ENCODE measurements at regions of chr10 and their contacts with region 1.

Region 1: GRCh38 chr10:77234599-77234998 is 403.0 kb downstream of the KCNMA1 start:
- DNase-seq: peak; percentile 27
- H3K4me3 Mint-ChIP-seq: peak overlapping the region; percentile 11
- H3K27ac Mint-ChIP-seq: peak overlapping the region; percentile 88
- H3K4me1 Mint-ChIP-seq: peaks cover 47% of the 10 kb centered on the region
- H3K27me3 Mint-ChIP-seq: no peaks in the 10 kb centered on the region
- CTCF ChIP-seq: no peak

Region 2: DNA sequence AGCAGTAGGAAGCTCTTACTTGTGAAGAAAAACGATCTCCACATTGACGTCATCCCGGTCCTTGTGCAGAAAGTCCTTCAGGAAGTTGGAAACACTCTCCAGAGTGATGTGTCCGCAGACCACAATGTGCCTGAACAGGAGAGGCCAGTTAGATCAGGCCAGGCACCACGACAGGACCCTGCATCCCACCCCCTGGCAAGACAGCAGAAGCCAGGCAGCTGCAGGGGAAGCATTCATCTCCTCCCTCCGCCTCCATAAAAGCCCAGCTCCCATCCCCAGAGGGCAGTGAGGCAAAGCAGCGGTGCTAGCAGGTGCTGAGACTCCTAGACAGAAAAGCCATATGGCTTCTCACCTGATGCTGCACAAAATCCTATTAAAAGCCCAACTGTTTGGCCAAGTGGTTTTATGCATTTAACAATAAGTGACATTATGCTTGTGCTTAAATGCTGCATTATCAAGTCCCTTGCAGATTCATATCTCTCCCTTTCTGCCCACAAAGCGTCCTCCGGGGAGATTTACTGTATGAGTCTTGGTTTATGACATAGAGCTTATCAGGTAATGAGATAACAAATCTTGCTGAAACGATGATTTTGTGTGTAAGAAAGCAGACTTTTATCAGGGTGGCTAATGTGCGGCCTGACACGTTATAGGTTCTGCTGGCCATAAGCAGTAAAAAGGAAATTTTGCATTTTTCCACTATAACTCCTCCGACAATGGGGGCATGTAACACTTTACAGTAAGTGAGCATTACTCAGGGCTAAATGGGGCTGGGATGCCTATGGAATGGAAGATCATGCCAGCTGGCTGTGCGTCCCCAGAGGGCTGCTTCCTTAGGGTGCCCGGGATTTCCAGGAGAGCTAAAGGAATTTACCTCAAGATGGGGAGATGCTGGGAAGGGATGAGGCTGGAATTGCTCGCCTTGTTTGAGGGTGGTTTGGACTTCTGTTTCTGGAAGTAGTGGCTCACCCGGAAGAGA is 143.9 kb before region 1 on chr10:
- CTCF ChIA-PET with region 1: no interaction called
- intact Hi-C with region 1: no loop called
- DNase-seq: no peak
- H3K4me3 Mint-ChIP-seq: no peak overlapping the region
- H3K27ac Mint-ChIP-seq: no peak overlapping the region
- H3K4me1 Mint-ChIP-seq: no peaks in the 10 kb centered on the region
- H3K27me3 Mint-ChIP-seq: peaks cover 82% of the 10 kb centered on the region
- CTCF ChIP-seq: no peak

Region 3: GRCh38 chr10:77185696-77186095 is 48.9 kb before region 1 on chr10:
- CTCF ChIA-PET with region 1: no interaction called
- intact Hi-C with region 1: loop called (anchors 2 kb)
- DNase-seq: peak; percentile 33
- H3K4me3 Mint-ChIP-seq: no peak overlapping the region
- H3K27ac Mint-ChIP-seq: peak overlapping the region; percentile 23
- H3K4me1 Mint-ChIP-seq: peaks cover 28% of the 10 kb centered on the region
- H3K27me3 Mint-ChIP-seq: no peaks in the 10 kb centered on the region
- CTCF ChIP-seq: no peak

Region 4: DNA sequence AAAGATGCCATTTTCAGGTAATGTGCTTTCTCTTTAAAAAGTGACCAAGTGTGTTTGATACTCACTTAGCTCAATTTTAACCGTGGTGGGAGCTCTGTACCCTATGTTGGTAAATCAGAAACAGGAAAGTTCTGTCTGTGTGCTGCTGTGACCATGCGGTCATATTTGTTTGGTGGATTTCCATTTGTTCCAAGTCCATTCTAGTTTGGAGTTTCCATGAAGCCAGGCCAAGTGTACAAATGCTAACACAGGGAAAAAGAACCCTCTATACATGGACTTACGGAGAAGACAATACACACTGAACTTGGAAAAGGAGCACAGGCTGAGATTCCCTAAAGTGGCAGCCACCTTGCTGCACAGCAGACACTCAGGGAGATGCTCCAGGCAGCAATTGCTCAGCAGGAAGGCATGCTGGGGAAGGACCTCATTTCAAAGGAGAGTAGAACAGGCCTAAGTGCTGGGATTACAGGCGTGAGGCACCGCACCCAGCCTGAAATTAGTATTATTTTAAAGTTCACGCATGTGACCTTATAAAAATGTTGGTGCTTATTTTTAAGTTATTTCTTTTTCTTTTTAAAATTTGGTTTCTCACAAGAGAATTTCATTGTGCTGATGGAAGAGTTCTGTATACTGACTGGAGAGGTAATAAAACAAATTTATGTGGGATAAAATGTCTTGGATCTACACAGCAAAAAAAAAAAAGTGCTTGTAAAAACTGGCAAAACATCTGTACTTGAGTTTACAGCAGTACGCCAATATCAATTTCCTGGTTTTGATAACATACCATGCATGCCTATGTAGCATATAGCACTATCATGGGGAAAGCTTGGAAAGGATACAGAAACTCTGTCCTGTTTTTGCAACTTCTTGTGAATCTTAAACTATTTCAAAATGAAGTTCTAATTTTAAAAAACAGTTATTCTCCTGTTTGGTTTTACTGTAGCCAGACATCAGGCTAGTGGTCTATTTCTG is 33.2 kb before region 1 on chr10:
- CTCF ChIA-PET with region 1: no interaction called
- intact Hi-C with region 1: no loop called
- DNase-seq: no peak
- H3K4me3 Mint-ChIP-seq: no peak overlapping the region
- H3K27ac Mint-ChIP-seq: no peak overlapping the region
- H3K4me1 Mint-ChIP-seq: no peaks in the 10 kb centered on the region
- H3K27me3 Mint-ChIP-seq: peaks cover 32% of the 10 kb centered on the region
- CTCF ChIP-seq: no peak

Measured in Calu3 (cell line).